ENCODE measurements at regions of chr11 and their contacts with region 1.

Region 1: GRCh38 chr11:11022125-11022730 is 164.4 kb upstream of the ZBED5 start:
- DNase-seq: no peak
- H3K4me3 ChIP-seq: no peak overlapping the region
- H3K27ac ChIP-seq: no peak overlapping the region
- H3K4me1 ChIP-seq: no peaks in the 10 kb centered on the region
- H3K27me3 ChIP-seq: no peaks in the 10 kb centered on the region
- CTCF ChIP-seq: peak; percentile 16 to 38 (median 25)
- POLR2A ChIP-seq: no peak

Region 2: DNA sequence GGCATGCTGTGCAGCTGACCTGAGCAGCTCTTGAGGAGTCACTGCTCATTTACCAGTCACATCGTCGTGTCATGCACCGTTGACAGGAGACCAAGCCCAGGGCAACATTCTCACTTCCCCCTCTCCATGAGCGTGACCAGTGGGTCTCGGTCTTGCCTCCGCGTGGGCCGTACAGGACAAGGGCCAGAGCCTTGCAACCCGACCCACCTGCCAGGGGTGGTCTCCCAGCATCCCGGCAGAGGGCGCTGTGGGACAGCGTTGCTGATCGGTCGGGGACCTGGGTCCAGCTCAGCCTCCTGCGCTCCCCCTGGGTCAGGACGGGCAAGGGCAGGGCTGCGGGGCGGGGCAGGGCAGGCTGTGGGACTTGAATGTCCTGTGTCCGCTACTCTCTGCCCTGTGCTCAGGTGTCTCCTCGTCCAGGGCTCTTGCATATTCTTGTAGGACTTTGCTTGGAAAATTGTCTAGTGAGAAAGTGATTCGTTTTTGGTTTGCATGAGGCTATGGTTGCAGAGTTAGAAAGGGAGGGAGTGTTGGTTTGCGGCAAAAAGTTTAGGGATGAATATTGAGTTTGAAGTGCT is 229.7 kb before region 1 on chr11:
- intact Hi-C with region 1: loop called (anchors 5 kb)
- DNase-seq: no peak
- H3K4me3 ChIP-seq: no peak overlapping the region
- H3K27ac ChIP-seq: no peak overlapping the region
- H3K4me1 ChIP-seq: peaks cover 10% of the 10 kb centered on the region
- H3K27me3 ChIP-seq: no peaks in the 10 kb centered on the region
- CTCF ChIP-seq: peak; percentile 74 to 89 (median 89)
- POLR2A ChIP-seq: no peak

Region 3: DNA sequence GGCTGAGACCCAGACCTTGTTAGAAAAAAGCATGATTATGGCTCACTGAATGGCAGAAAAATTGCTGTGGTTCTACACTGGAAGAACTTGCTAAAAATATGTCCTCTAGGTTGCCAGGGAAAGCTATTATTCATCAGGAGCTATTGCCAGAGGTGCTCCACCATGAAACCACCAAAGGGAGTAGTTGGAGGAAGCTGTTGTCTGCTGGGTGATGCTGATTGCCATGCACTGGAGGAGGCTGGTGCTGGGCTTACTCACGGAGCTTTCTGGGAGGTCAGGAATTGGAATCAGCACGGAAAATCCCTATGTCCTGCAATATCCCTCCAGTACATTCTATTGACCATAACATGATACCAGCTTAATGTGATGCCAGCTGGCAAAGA is 35.2 kb after region 1 on chr11:
- intact Hi-C with region 1: no loop called
- DNase-seq: peak in 1 of 2 donors; percentile 16
- H3K4me3 ChIP-seq: no peak overlapping the region
- H3K27ac ChIP-seq: no peak overlapping the region
- H3K4me1 ChIP-seq: no peaks in the 10 kb centered on the region
- H3K27me3 ChIP-seq: no peaks in the 10 kb centered on the region
- CTCF ChIP-seq: no peak
- POLR2A ChIP-seq: no peak

Region 4: GRCh38 chr11:11081776-11082175 is 59.5 kb after region 1 on chr11:
- intact Hi-C with region 1: no loop called
- DNase-seq: no peak
- H3K4me3 ChIP-seq: no peak overlapping the region
- H3K27ac ChIP-seq: no peak overlapping the region
- H3K4me1 ChIP-seq: no peaks in the 10 kb centered on the region
- H3K27me3 ChIP-seq: no peaks in the 10 kb centered on the region
- CTCF ChIP-seq: no peak
- POLR2A ChIP-seq: no peak